Activated naive CD4-positive, alpha-beta T cell treated with anti-CD3 and anti-CD28 coated beads for 36 hours (primary cell): ENCODE measurements at regions of chr11 and their contacts with region 1.

Region 1: GRCh38 chr11:68312117-68312779 is at the start of gene LRP5:
- DNase-seq: no peak
- H3K4me3 Mint-ChIP-seq: peak within 1 kb of the TSS; percentile 91
- H3K27ac Mint-ChIP-seq: no peak within 1 kb of the TSS
- H3K4me1 Mint-ChIP-seq: peaks cover 21% of the 10 kb centered on the region
- H3K27me3 Mint-ChIP-seq: no peaks in the 10 kb centered on the region
- total RNA-seq, gene LRP5: 14.3 to 17.1 TPM

Region 2: DNA sequence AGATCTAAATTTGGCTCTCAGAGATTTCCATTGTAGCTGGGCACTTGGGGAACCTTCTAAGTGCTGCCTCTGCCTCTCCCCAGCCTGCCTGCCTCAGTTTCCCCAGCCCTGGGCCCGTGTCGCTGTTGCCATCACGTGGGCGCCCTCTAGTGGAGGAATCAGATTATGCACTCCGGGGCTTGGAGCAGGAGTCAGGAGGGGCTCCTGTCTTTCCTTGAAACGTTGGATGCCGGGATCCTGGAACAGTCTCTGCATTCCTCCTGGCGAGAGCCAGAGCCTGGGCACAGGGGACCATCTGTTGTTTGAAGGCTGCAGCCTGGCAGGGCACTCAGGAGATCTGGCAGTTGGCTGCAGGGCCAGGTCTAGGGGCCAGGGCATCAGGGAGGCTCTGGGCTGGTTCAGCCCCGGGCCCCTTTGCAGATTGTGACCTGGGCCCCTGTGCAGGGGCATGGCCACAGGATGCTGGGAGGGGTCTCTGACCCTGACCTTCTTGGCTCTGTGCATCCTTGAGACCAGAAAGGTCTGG is 71.8 kb after region 1 on chr11:
- CTCF ChIA-PET with region 1: interaction called, 7 read pairs
- intact Hi-C with region 1: loop called (anchors 2 kb)
- DNase-seq: peak; percentile 76
- H3K4me3 Mint-ChIP-seq: no peak overlapping the region
- H3K27ac Mint-ChIP-seq: no peak overlapping the region
- H3K4me1 Mint-ChIP-seq: peaks cover 13% of the 10 kb centered on the region
- H3K27me3 Mint-ChIP-seq: peaks cover 5% of the 10 kb centered on the region